Left ventricle myocardium inferior (tissue), 1 donor: ENCODE measurements at regions of chr10 and their contacts with region 1.

Region 1: DNA sequence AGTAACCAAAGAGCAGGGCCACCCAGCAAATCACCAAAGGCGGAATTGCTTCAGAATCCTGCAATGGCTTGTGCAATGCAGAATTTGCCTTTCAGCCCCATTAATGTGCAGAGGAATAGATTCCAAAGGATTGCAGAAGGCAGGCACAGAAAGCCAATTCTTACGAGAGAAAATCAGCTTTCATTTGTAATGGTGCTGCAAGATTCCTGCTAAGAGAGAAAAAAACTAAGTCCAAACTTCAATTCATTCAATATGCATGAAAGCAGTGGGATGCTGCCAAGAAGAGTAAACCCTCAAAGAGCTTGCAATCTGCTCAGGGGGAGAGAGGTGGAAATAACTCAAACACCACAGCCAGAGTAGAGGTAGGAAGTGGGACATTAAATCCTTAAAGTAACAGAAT is 70.4 kb downstream of the ENO4 start:
- DNase-seq: no peak
- H3K4me3 ChIP-seq: no peak overlapping the region
- H3K27ac ChIP-seq: no peak overlapping the region
- H3K4me1 ChIP-seq: no peaks in the 10 kb centered on the region
- H3K27me3 ChIP-seq: no peaks in the 10 kb centered on the region
- CTCF ChIP-seq: no peak

Region 2: DNA sequence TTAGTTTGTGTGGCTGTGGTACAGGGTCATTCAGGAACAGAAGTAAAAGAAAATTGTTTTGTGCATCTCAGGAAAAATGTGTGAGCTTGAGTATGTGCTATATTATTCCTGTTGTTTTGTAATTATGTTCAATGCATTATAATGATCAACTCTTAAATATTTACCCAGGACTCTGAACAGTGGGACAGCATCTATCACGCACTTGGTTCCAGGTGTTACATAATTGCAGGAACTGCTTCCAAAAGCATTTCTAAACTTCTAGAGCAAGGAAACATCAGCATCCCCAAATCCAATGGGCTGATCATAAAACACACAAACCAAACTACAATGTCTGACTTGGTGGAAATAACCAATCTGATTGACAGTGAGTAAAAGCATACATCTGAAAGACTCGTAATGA is 43.8 kb before region 1 on chr10:
- intact Hi-C with region 1: loop called (anchors 2 kb)
- DNase-seq: no peak
- H3K4me3 ChIP-seq: no peak overlapping the region
- H3K27ac ChIP-seq: no peak overlapping the region
- H3K4me1 ChIP-seq: no peaks in the 10 kb centered on the region
- H3K27me3 ChIP-seq: peaks cover 17% of the 10 kb centered on the region
- CTCF ChIP-seq: no peak